ENCODE measurements at regions of chr14 and their contacts with region 1.

Region 1: GRCh38 chr14:77124345-77125280 is 17.0 kb downstream of the ZDHHC22 start:
- DNase-seq: peak; percentile 80
- ATAC-seq: peak; percentile 35
- H3K4me3 Mint-ChIP-seq: peak overlapping the region; percentile 85
- H3K27ac Mint-ChIP-seq: peak overlapping the region; percentile 98
- H3K4me1 Mint-ChIP-seq: peaks cover 61% of the 10 kb centered on the region
- H3K27me3 Mint-ChIP-seq: peaks cover 5% of the 10 kb centered on the region
- CTCF ChIP-seq: no peak

Region 2: DNA sequence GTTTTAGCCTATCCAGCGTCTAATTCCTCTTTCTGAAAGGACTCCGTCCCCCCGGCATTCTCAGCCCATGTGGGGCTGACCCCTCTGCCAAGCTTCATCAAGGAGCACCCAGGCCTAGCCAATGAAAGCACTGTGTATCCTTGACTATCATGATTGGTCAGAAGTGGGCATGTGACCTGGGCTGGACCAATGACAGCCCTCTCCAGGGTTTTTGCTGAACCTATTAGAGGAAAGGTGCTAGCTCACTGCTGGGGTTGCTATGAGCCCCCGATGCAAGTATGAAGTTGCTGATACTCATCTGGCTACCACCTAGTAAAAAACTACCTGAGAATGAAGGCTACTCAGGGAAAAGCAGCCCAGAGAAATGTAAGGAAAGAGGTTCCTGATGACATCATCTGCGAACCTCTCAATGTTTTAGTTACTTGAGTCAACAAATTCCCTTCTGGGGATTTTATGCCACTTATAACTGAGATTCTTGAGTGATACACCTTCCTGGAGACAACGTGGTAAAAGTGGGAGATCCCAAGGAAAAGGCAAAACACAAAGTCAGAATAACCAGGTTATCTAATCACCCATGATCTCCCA is 230.2 kb before region 1 on chr14:
- CTCF ChIA-PET with region 1: no interaction called
- POLR2A ChIA-PET with region 1: no interaction called
- intact Hi-C with region 1: no loop called
- DNase-seq: no peak
- ATAC-seq: no peak
- H3K4me3 Mint-ChIP-seq: no peak overlapping the region
- H3K27ac Mint-ChIP-seq: no peak overlapping the region
- H3K4me1 Mint-ChIP-seq: no peaks in the 10 kb centered on the region
- H3K27me3 Mint-ChIP-seq: no peaks in the 10 kb centered on the region
- CTCF ChIP-seq: no peak

Region 3: DNA sequence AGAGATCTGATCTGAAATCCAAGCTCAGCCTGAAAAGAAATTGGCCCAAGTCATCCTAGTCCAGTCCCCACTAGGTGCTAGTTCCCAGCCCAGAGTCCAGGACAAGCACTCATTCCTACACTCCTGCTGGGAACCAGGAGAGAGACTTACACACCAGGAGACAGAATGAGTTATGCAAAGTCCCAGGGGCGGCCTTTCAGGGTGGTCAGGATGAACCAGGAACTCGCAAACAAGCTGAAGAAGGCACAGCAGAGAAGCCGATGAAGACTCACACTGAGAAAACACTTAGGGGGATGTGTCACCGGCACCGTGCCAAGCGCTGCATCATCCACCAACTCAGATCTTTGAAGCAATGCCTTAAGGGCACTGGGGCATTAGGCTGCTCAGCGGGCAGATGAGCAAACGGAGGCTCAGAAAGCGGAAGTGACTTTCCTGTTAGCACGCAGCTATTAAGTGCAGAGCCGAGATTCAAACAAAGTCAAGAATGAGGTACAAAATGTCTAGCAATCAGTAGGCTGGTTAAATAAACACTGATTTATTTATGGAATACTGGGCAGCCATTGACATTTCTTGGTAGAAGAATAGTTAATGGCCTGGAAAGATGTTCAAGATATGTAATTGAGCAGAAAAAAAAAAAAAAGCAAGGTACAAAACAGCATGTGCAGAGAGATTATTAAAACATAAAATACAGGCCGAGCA is 219.7 kb before region 1 on chr14:
- CTCF ChIA-PET with region 1: no interaction called
- POLR2A ChIA-PET with region 1: interaction called, 8 read pairs
- intact Hi-C with region 1: loop called (anchors 1 kb)
- DNase-seq: peak; percentile 73
- ATAC-seq: peak; percentile 92
- H3K4me3 Mint-ChIP-seq: peak overlapping the region; percentile 63
- H3K27ac Mint-ChIP-seq: peak overlapping the region; percentile 93
- H3K4me1 Mint-ChIP-seq: peaks cover 39% of the 10 kb centered on the region
- H3K27me3 Mint-ChIP-seq: no peaks in the 10 kb centered on the region
- CTCF ChIP-seq: no peak

Region 4: DNA sequence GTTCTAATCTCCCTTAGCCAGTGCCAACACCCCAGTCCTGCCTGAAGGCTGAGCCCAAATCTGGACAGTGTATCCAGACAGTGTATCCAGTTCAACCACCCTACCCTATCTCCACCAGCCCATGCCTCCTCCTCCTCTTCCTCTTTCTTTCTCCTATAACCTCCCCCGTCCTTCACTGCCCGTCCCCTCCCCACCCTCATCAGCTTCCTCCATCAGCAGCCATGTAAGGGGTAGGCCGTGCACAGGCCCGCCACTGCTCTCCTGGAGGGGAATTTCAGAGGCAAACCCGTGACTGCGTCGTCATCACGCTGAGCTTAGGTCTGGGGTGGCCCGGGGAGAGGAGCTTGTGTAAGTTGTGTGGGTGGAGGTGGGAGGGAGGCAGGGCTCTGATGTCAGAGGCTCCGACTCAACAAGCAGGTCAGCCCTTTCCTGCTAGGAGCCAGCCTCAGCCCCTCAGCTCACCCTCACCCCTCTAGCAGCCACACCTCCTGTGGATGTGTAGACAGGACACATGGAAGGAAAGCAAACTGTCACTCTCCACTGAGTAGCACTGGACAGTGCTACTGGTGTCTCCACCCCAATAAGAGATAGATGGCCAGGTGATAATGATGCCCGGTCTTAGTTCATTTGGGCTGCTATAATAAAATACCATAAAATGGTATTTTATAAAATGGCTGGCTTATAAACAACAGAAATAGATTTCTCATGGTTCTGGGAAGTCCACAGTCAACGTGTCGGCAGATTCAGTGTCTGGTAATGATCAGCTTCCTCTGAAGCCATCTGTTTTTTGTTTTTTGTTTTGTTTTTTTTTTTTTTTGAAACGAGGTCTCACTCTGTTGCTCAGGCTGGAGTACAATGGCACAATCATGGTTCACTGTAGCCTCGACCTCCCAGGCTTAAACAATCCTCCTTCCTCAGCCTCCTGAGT is 146.6 kb before region 1 on chr14:
- CTCF ChIA-PET with region 1: no interaction called
- POLR2A ChIA-PET with region 1: no interaction called
- intact Hi-C with region 1: loop called (anchors 5 kb)
- DNase-seq: peak; percentile 74
- ATAC-seq: peak; percentile 96
- H3K4me3 Mint-ChIP-seq: peak overlapping the region; percentile 63
- H3K27ac Mint-ChIP-seq: peak overlapping the region; percentile 88
- H3K4me1 Mint-ChIP-seq: peaks cover 31% of the 10 kb centered on the region
- H3K27me3 Mint-ChIP-seq: no peaks in the 10 kb centered on the region
- CTCF ChIP-seq: no peak

Region 5: DNA sequence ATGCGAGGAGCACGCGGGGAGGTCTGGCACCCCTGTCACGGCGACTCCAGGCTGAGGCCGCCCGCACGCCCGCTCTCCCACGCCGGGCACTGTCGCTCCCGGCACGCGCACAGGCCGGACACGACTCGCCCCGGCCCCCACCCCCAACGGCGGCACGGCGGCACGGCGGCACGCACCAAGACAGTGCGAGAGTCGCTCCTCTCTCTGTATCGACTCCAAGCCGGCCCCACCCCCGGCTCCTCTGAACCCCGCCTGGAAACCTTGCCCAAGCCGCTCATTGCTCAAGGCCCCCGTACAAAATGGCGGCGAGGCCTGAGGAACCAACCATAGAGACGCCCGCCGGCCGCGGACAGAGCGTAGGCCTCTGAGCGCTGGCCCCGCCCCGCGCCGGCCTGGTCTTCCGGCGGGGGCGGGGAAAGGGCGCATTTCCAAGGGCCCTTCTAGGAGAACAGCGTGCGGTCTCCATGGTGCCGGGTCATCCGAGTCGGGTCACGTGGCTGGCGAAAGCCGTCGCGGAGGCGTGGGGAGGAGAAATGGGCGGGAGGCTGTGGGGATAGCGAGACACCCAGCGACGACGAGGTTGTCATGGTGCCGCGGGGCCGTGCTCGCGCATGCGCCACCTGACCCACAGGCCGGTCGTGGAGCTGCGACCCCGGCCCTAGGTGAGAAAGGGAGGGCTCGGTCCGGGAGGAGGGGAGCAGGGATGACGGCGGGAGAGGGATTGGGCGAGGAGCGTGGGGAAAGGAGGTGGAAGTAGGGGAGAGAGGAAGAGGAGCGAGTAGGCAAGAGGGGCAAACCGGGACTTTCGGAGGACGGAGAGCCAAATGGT is 26.7 kb before region 1 on chr14 and contains the start of gene CIPC:
- CTCF ChIA-PET with region 1: interaction called, 112 read pairs
- POLR2A ChIA-PET with region 1: interaction called, 329 read pairs
- intact Hi-C with region 1: loop called (anchors 1 kb)
- DNase-seq: peak; percentile 96
- ATAC-seq: peak; percentile 86
- H3K4me3 Mint-ChIP-seq: peak within 1 kb of the TSS; percentile 99
- H3K27ac Mint-ChIP-seq: peak within 1 kb of the TSS; percentile 98
- H3K4me1 Mint-ChIP-seq: peaks cover 72% of the 10 kb centered on the region
- H3K27me3 Mint-ChIP-seq: no peaks in the 10 kb centered on the region
- CTCF ChIP-seq: no peak
- total RNA-seq, gene CIPC: 26.6 and 28.5 TPM in 2 replicates

Region 6: GRCh38 chr14:77376771-77377501 is 252.3 kb after region 1 on chr14 and contains the starts of genes SAMD15 and TMED8:
- CTCF ChIA-PET with region 1: no interaction called
- POLR2A ChIA-PET with region 1: interaction called, 3 read pairs
- intact Hi-C with region 1: loop called (anchors 1 kb)
- DNase-seq: peak; percentile 85
- ATAC-seq: peak; percentile 89
- H3K4me3 Mint-ChIP-seq: peak within 1 kb of the TSS; percentile 93
- H3K27ac Mint-ChIP-seq: peak within 1 kb of the TSS; percentile 93
- H3K4me1 Mint-ChIP-seq: peaks cover 39% of the 10 kb centered on the region
- H3K27me3 Mint-ChIP-seq: no peaks in the 10 kb centered on the region
- CTCF ChIP-seq: no peak
- total RNA-seq, gene SAMD15: 0.71 and 1.00 TPM in 2 replicates
- total RNA-seq, gene TMED8: 29.9 and 31.3 TPM in 2 replicates

Region 7: DNA sequence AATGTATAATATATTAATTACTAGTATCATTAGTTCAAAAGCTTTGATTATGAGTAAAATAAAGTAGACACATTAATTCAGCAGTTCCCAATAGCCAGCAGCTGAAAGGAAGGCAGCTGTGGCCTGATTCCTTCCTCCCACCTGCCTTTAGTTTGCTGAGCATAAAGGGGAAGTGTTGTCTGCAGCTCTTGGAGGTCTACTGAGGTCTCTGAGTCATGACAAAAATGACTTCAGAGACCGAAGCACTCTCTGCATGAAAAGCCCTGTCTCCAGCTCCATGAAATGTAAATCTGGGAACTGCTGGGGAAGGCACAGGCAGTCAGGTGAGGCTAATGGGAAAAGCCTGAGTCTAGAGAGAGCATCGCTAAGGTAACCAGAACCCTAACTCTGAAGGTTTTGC is 1210.9 kb after region 1 on chr14:
- CTCF ChIA-PET with region 1: no interaction called
- POLR2A ChIA-PET with region 1: no interaction called
- intact Hi-C with region 1: no loop called
- DNase-seq: no peak
- ATAC-seq: no peak
- H3K4me3 Mint-ChIP-seq: no peak overlapping the region
- H3K27ac Mint-ChIP-seq: no peak overlapping the region
- H3K4me1 Mint-ChIP-seq: no peaks in the 10 kb centered on the region
- H3K27me3 Mint-ChIP-seq: peaks cover 6% of the 10 kb centered on the region
- CTCF ChIP-seq: no peak